Spleen (tissue), 13 donors: ENCODE measurements at regions of chr21 and their contacts with region 1.

Region 1: GRCh38 chr21:18265944-18266343 is 21.3 kb downstream of the CHODL start:
- DNase-seq: no peak
- H3K4me3 ChIP-seq: no peak overlapping the region
- H3K27ac ChIP-seq: no peak overlapping the region
- H3K4me1 ChIP-seq: no peaks in the 10 kb centered on the region
- H3K27me3 ChIP-seq: no peaks in the 10 kb centered on the region
- CTCF ChIP-seq: no peak
- POLR2A ChIP-seq: no peak

Region 2: GRCh38 chr21:17118638-17119384 is 1147.1 kb before region 1 on chr21:
- intact Hi-C with region 1: no loop called
- DNase-seq: no peak
- H3K4me3 ChIP-seq: no peak overlapping the region
- H3K27ac ChIP-seq: no peak overlapping the region
- H3K4me1 ChIP-seq: no peaks in the 10 kb centered on the region
- H3K27me3 ChIP-seq: no peaks in the 10 kb centered on the region
- CTCF ChIP-seq: no peak
- POLR2A ChIP-seq: no peak

Region 3: GRCh38 chr21:18041012-18041411 is 224.9 kb before region 1 on chr21:
- intact Hi-C with region 1: loop called (anchors 10 kb)
- DNase-seq: no peak
- H3K4me3 ChIP-seq: no peak overlapping the region
- H3K27ac ChIP-seq: no peak overlapping the region
- H3K4me1 ChIP-seq: no peaks in the 10 kb centered on the region
- H3K27me3 ChIP-seq: no peaks in the 10 kb centered on the region
- CTCF ChIP-seq: peak in 9 of 11 experiments; percentile 13 to 57 (median 39)
- POLR2A ChIP-seq: no peak

Region 4: GRCh38 chr21:18058731-18059398 is 207.1 kb before region 1 on chr21:
- intact Hi-C with region 1: no loop called
- DNase-seq: no peak
- H3K4me3 ChIP-seq: no peak overlapping the region
- H3K27ac ChIP-seq: no peak overlapping the region
- H3K4me1 ChIP-seq: no peaks in the 10 kb centered on the region
- H3K27me3 ChIP-seq: no peaks in the 10 kb centered on the region
- CTCF ChIP-seq: no peak
- POLR2A ChIP-seq: no peak